Prostate gland (tissue), 2 donors: ENCODE measurements at regions of chr17 and their contacts with region 1.

Region 1: DNA sequence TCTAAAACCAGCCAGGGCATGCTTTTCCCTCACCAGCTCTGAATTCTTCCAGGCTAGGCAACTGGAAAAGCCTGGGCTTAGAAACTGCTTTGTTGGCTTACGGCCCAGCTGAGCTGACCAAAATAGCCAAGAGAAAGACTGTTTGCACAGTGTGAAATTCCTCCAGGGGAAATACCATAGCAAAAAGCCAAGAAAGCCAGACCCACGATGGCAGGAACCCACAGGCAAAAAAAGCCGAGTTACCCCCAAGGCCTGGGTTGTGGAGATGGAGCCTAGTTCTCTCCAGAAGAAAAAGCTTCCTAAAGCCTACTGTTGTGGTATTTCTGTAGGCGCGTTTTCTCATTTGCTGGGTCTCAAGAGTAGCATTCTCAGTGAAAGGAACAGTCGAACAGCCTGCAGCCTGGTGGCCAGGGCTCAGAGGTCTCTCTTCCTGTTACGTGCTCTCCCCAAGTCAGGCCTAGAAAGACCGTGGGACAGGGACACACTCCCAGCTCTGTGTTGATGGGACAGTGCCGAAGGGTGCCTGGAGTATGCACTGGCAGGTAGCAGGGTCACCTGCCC is 9.3 kb downstream of the SP2 start:
- DNase-seq: peak; percentile 74
- H3K4me3 ChIP-seq: no peak overlapping the region
- H3K27ac ChIP-seq: peak overlapping the region; percentile 60 to 74
- H3K4me1 ChIP-seq: no peaks in the 10 kb centered on the region
- H3K27me3 ChIP-seq: no peaks in the 10 kb centered on the region
- CTCF ChIP-seq: no peak
- POLR2A ChIP-seq: no peak

Region 2: GRCh38 chr17:47949136-47949759 is 43.9 kb after region 1 on chr17:
- intact Hi-C with region 1: loop called (anchors 5 kb)
- DNase-seq: peak; percentile 89
- H3K4me3 ChIP-seq: peak overlapping the region; percentile 13 to 29
- H3K27ac ChIP-seq: peak overlapping the region; percentile 89 to 93
- H3K4me1 ChIP-seq: peaks cover 16% of the 10 kb centered on the region
- H3K27me3 ChIP-seq: no peaks in the 10 kb centered on the region
- CTCF ChIP-seq: peak; percentile 80 to 97 (median 94)
- POLR2A ChIP-seq: no peak

Region 3: GRCh38 chr17:47987240-47987835 is 82.0 kb after region 1 on chr17:
- intact Hi-C with region 1: no loop called
- DNase-seq: peak; percentile 64
- H3K4me3 ChIP-seq: no peak overlapping the region
- H3K27ac ChIP-seq: peak overlapping the region; percentile 51 to 55
- H3K4me1 ChIP-seq: peaks cover 26% of the 10 kb centered on the region
- H3K27me3 ChIP-seq: no peaks in the 10 kb centered on the region
- CTCF ChIP-seq: no peak
- POLR2A ChIP-seq: no peak

Region 4: DNA sequence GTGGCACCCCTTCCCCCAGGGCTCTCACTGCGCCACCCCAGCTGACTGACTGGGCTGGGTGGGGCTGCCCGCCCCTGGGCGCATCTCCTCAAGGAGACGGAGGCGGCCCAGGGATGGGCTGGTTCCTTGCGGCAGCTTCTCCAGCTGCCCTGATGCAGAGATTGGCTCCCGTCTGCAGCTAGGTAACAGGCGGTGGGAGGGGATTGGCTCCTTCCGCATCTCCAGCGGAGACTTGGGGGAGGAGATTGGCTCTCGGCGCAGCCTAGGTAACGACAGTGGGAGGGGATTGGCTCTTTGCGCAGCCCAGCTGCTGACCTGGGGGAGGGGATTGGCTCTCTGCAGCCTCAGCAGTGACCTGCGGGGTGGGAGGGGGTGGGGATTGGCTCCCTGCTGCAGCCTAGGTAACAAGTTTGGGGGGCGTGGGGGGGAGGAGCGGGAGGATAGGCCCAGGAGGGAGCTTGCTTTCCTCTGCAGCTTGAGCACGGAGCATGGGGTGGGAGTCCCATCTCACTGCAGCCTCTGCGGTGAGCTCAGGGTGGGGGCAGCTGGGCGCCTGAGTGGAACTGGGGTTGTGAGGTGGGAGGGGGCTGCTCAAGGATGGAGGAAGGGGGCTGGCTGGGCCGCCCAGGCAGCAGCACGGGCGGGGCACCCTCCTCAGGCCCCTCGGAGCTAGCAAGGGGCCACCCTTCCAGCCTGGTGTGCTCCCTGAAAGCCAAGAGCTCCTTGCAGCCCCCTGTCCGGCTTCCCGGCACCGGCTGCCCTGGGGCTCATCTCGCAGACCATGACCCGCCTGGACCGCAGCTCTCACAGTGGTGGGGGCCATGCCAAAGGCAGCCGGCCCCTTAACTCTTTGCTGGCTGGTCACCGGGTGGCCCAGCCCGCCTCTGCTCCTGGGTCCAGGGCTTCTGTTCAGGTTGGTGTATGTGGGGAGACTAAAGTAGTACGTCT is 149.2 kb after region 1 on chr17:
- intact Hi-C with region 1: no loop called
- DNase-seq: peak; percentile 87
- H3K4me3 ChIP-seq: peak overlapping the region in 1 of 2 donors; percentile 19
- H3K27ac ChIP-seq: peak overlapping the region; percentile 95 to 98
- H3K4me1 ChIP-seq: peaks cover 42% of the 10 kb centered on the region
- H3K27me3 ChIP-seq: no peaks in the 10 kb centered on the region
- CTCF ChIP-seq: no peak
- POLR2A ChIP-seq: peak; percentile 17